ENCODE measurements at regions of chr2 and their contacts with region 1.

Region 1: DNA sequence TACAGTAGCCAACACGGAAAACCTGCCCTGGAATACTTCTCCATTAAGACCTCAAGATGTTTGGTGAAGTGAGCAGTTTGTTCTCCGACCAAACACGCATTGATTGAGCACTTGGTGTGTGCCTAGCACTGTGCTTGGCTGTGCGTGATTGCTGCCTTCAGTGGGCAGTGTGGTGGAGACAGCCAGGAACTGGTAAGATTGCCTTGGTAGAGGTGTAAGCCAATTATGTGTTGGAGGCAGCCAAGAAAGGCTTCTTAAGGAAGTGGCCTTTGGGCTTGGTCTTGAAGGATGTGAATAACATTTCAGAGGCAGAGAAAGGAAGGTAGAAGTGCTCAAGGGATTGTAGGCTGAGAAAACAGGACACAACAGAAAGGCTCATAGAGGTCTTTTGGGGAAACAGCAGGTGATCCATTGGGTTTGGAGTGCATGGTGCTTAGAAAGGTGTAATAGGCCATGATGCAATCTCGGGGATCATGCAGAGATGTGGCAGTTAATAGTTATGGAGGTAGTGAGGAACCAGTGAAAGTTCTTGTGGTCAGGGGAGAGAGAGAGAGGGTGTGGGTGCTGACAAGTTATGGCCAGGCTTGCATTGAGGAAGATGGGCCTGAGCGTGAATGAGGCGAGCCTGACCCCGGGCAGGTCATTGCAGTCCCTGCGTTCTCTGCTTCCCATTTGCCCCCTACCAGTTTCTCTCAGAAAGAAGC is 6.3 kb downstream of the B3GNT2 start:
- DNase-seq: no peak
- ATAC-seq: peak; percentile 62
- H3K4me3 ChIP-seq: peak overlapping the region; percentile 86
- H3K27ac ChIP-seq: peak overlapping the region; percentile 89
- H3K4me1 ChIP-seq: peaks cover 26% of the 10 kb centered on the region
- H3K27me3 ChIP-seq: no peaks in the 10 kb centered on the region
- CTCF ChIP-seq: no peak
- EP300 ChIP-seq: 0 out of 4 replicates have a peak, but pooled peaks of 1 of the 2 experiments have one; percentile 31
- POLR2A ChIP-seq: peak; percentile 65
- RAD21 ChIP-seq: no peak

Region 2: DNA sequence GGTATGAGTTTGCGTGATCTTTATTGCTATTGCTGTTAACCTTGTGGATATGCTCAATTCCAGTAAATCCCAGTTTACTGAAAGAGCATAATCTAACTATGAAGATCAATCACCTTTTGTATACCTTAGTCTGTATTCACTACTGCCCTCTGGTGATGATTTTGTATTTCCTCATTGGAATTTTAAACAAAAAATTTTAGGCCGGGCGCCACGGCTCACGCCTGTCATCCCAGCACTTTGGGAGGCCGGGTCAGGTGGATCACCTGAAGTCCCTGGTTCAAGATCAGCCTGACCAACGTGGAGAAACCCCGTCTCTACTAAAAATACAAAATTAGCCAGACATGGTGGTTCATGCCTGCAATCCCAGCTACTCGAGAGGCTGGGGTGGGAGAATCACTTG is 291.6 kb before region 1 on chr2:
- CTCF ChIA-PET with region 1: interaction called, 3 read pairs
- POLR2A ChIA-PET with region 1: no interaction called
- RAD21 ChIA-PET with region 1: no interaction called
- SMC1A ChIA-PET with region 1: no interaction called
- in situ Hi-C with region 1: no loop called
- intact Hi-C with region 1: loop called (anchors 5 kb)
- DNase-seq: no peak
- ATAC-seq: no peak
- H3K4me3 ChIP-seq: no peak overlapping the region
- H3K27ac ChIP-seq: no peak overlapping the region
- H3K4me1 ChIP-seq: no peaks in the 10 kb centered on the region
- H3K27me3 ChIP-seq: no peaks in the 10 kb centered on the region
- CTCF ChIP-seq: peak in 2 of 3 experiments; percentile 12 to 19; a peak in 2 of 6 replicates
- EP300 ChIP-seq: no peak
- POLR2A ChIP-seq: no peak
- RAD21 ChIP-seq: no peak

Region 3: GRCh38 chr2:61978522-61978921 is 223.6 kb before region 1 on chr2:
- CTCF ChIA-PET with region 1: no interaction called
- POLR2A ChIA-PET with region 1: no interaction called
- RAD21 ChIA-PET with region 1: no interaction called
- SMC1A ChIA-PET with region 1: no interaction called
- in situ Hi-C with region 1: no loop called
- intact Hi-C with region 1: no loop called
- DNase-seq: peak; percentile 45
- ATAC-seq: peak; percentile 80
- H3K4me3 ChIP-seq: no peak overlapping the region
- H3K27ac ChIP-seq: 0 out of 2 replicates have a peak overlapping the region, but pooled peaks have one; percentile 13
- H3K4me1 ChIP-seq: peaks cover 10% of the 10 kb centered on the region
- H3K27me3 ChIP-seq: no peaks in the 10 kb centered on the region
- CTCF ChIP-seq: no peak
- EP300 ChIP-seq: no peak
- POLR2A ChIP-seq: no peak
- RAD21 ChIP-seq: no peak

Region 4: DNA sequence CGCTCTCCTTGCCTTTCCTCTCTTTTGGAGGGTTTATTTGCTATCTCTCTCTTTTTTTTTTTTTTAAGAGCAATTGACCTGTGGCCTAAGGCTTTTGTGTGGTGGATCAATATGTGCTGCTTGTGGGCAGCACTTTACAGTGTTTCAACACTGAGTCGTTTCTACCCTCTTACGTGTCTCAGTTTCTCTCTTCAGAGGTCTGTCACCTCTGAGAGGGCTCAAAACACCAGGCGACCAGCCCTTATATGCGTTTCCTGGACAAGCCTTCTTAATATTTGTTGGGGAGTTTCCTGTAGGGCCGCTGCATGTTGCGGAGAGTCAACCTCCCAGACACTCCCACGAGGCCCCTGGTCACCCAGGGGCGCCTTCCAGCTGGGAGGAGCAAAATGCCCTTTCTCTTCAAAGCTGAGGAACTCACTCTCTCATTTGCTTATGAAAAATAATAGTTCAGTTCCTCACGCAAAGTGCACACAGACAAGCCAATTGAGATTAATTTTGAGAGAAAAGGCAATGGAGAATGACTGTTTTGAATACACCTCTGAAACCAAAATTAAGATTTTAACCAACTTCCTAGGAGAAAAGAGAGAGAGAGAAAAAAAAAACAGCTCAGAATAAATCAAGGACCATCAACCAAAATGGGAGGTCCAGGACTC is 102.5 kb before region 1 on chr2:
- CTCF ChIA-PET with region 1: no interaction called
- POLR2A ChIA-PET with region 1: interaction called, 10 read pairs
- RAD21 ChIA-PET with region 1: interaction called, 15 read pairs
- SMC1A ChIA-PET with region 1: interaction called, 8 read pairs
- in situ Hi-C with region 1: no loop called
- intact Hi-C with region 1: loop called (anchors 1 kb)
- DNase-seq: peak; percentile 80
- ATAC-seq: peak; percentile 96
- H3K4me3 ChIP-seq: peak overlapping the region; percentile 53
- H3K27ac ChIP-seq: peak overlapping the region; percentile 95
- H3K4me1 ChIP-seq: peaks cover 43% of the 10 kb centered on the region
- H3K27me3 ChIP-seq: no peaks in the 10 kb centered on the region
- CTCF ChIP-seq: no peak
- EP300 ChIP-seq: peak; percentile 13 to 16; a peak in 1 of 4 replicates
- POLR2A ChIP-seq: no peak
- RAD21 ChIP-seq: no peak

Region 5: GRCh38 chr2:62149708-62150107 is 52.5 kb before region 1 on chr2:
- CTCF ChIA-PET with region 1: interaction called, 6 read pairs
- POLR2A ChIA-PET with region 1: interaction called, 20 read pairs
- RAD21 ChIA-PET with region 1: interaction called, 63 read pairs
- SMC1A ChIA-PET with region 1: interaction called, 91 read pairs
- in situ Hi-C with region 1: no loop called
- intact Hi-C with region 1: loop called (anchors 2 kb)
- DNase-seq: no peak
- ATAC-seq: peak; percentile 23
- H3K4me3 ChIP-seq: no peak overlapping the region; the same call in 1 of the 2 replicates
- H3K27ac ChIP-seq: peak overlapping the region; percentile 91
- H3K4me1 ChIP-seq: peaks cover 43% of the 10 kb centered on the region
- H3K27me3 ChIP-seq: no peaks in the 10 kb centered on the region
- CTCF ChIP-seq: no peak
- EP300 ChIP-seq: no peak
- POLR2A ChIP-seq: no peak
- RAD21 ChIP-seq: no peak

Region 6: DNA sequence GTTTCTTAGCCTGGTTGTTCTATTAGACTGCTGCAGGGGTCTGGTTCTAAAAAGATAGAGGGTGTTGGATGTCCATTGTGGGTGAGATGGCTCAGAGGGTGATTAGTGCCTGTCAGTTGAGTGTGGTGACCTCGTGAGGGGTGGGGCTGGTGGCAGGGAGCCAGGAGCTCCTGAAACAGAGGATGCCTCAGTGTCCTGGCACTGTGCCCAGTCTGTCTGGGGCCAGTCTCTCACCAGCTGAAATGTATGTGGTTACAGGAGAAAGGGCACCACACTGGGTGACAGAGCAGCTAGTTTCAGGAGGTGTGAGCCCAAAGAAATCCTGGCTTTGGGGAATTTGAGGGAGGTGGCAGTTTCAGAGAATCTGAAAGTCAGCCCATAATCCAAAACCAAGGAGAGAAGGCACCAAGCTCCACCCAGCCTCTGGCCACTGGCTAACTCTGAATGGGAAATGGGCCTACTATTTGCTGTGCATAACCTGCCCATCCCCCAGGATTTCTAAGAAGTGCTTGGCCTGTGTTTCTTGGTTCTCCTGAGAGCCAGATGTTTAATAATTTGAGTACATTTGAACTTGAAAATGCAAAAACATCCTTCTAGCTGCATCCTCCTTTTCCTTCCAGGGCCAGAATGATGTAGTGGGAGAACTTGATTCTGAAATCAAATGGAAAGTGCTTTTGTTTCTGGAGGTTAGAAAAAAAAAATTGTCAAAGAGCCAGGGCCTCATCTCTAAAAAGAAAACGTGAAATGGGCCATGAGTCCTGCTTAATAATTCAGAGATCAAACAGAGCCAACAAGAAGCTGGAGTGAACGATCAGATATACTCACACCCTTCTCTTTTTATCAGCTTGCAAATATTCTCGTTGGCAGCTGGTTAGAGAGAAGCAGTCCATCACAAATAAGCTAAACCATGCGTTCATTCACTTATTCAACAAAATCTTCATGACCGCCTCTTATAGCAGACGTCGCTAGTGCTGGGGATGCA is 86.0 kb after region 1 on chr2:
- CTCF ChIA-PET with region 1: interaction called, 4 read pairs
- POLR2A ChIA-PET with region 1: no interaction called
- RAD21 ChIA-PET with region 1: interaction called, 3 read pairs
- SMC1A ChIA-PET with region 1: interaction called, 10 read pairs
- in situ Hi-C with region 1: no loop called
- intact Hi-C with region 1: no loop called
- DNase-seq: peak; percentile 94
- ATAC-seq: peak; percentile 91
- H3K4me3 ChIP-seq: no peak overlapping the region
- H3K27ac ChIP-seq: peak overlapping the region; percentile 3; the same call in 1 of the 2 replicates
- H3K4me1 ChIP-seq: peaks cover 38% of the 10 kb centered on the region
- H3K27me3 ChIP-seq: no peaks in the 10 kb centered on the region
- CTCF ChIP-seq: no peak
- EP300 ChIP-seq: 0 out of 4 replicates have a peak, but pooled peaks of 1 of the 2 experiments have one; percentile 34
- POLR2A ChIP-seq: no peak
- RAD21 ChIP-seq: no peak

Region 7: DNA sequence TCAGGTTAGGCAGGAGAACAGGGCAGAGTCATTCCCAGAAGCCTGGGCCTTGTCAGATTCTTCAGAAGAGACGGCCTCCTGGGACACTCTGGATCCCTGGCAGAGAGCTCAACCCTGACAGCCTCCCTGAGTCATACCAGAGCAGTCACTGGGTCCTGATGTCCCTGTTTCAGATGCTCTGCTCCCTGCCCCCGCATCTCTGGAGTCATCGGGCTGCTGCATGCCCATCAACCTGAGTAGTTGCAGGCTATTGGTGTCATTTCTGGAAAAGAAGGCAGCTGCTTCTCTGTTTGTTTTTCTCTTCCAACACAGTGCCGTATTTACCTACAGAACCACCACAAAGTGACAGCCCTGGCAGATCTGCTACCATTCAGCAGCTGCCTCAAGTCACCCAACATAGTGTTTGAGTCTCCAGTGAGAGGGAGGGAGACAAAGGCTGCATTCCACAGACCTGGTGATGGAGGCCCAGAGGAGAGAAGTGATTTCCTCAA is 138.9 kb after region 1 on chr2:
- CTCF ChIA-PET with region 1: interaction called, 3 read pairs
- POLR2A ChIA-PET with region 1: no interaction called
- RAD21 ChIA-PET with region 1: interaction called, 10 read pairs
- SMC1A ChIA-PET with region 1: interaction called, 3 read pairs
- in situ Hi-C with region 1: no loop called
- intact Hi-C with region 1: loop called (anchors 5 kb)
- DNase-seq: peak; percentile 85
- ATAC-seq: peak; percentile 84
- H3K4me3 ChIP-seq: no peak overlapping the region
- H3K27ac ChIP-seq: peak overlapping the region; percentile 77
- H3K4me1 ChIP-seq: peaks cover 50% of the 10 kb centered on the region
- H3K27me3 ChIP-seq: no peaks in the 10 kb centered on the region
- CTCF ChIP-seq: no peak
- EP300 ChIP-seq: peak; percentile 15 to 43; a peak in 2 of 4 replicates
- POLR2A ChIP-seq: no peak; the same call in 1 of the 2 replicates
- RAD21 ChIP-seq: 0 out of 2 replicates have a peak, but pooled peaks have one; percentile 14

Region 8: GRCh38 chr2:62672601-62673000 is 470.4 kb after region 1 on chr2:
- CTCF ChIA-PET with region 1: no interaction called
- POLR2A ChIA-PET with region 1: no interaction called
- RAD21 ChIA-PET with region 1: no interaction called
- SMC1A ChIA-PET with region 1: no interaction called
- in situ Hi-C with region 1: no loop called
- intact Hi-C with region 1: no loop called
- DNase-seq: no peak
- ATAC-seq: no peak
- H3K4me3 ChIP-seq: no peak overlapping the region
- H3K27ac ChIP-seq: no peak overlapping the region
- H3K4me1 ChIP-seq: no peaks in the 10 kb centered on the region
- H3K27me3 ChIP-seq: no peaks in the 10 kb centered on the region
- CTCF ChIP-seq: no peak
- EP300 ChIP-seq: no peak
- POLR2A ChIP-seq: no peak
- RAD21 ChIP-seq: no peak

Measured in GM12878 (cell line).